ENCODE measurements at regions of chr2 and their contacts with region 1.

Region 1: DNA sequence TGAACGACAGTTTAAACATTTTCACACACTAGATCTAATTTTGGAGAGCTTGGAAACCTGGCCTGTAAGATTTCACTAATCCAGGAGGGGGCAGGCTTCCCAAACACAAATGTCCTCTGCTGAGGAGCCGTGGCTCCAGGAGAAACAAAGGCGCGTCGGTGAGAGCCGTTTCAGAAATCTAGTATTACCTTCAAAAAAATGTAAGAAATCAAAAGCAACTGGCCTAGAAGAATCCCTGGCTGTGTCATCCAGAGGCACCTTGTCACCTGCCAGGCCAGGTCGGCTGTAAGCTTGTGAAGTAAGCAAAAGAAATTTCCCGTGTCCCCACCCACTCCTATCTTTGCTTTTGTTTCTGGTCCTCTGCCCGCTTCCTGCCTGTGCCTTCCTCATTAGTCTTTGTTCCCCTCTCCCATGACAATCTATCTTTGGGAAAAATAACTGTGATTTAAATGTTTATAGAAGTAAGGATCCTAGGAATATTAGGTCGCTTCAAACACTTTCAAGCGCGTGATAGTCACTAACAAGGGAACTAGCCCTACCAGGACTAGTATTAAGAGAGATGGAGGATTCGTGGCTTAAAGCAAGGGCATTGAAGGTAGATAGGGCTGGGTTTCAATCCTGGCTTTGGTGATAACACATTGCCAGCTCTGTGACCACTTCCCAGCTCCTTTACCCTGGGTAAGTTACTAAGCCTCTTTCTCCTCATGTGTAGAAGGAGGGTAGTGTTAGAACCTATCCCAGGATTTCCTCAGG is 99.5 kb upstream of the STK39 start:
- DNase-seq: peak; percentile 63 to 69 (median 64)
- H3K4me3 ChIP-seq: peak overlapping the region in 1 of 2 donors; percentile 51
- H3K4me3 Mint-ChIP-seq: peak overlapping the region; percentile 83 to 95 (median 88)
- H3K27ac ChIP-seq: no peak overlapping the region
- H3K27ac Mint-ChIP-seq: peak overlapping the region in 3 of 7 donors; percentile 64 to 81 (median 76)
- H3K4me1 ChIP-seq: no peaks in the 10 kb centered on the region
- H3K4me1 Mint-ChIP-seq: peaks cover 5 to 7% (median 6%) of the 10 kb centered on the region in 4 donors
- H3K27me3 ChIP-seq: no peaks in the 10 kb centered on the region
- H3K27me3 Mint-ChIP-seq: peaks cover under 1 to 7% of the 10 kb centered on the region in 2 donors

Region 2: DNA sequence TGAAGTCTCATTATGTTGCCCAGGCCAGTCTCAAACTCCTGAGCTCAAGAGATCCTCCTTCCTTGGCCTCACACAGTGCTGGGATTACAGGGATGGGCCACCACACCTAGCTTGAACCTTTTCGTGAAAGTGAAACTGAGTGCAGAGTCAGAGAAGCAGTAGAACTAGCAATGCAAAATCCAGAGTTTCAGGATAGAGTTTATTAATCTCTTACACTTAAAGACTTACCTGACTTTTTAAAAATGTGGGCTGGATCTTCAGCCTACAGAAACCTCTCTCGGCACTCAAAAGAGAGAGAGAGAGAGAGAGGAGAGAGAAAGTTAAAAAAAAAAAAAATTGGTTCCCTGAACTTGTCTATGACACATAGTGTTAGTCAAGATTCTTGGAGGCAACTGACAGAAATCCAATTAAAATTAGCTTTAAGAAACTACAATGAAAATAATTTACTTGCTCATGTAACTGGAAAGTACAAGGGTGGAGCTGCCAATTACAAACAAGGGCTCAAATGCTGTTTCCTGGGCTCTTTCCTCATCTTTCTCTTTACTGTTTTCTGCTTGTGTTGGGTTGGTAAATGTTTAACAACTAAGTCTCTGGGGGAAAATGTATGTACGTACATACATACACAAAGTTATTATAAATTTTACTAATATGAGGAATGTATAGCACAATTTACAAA is 11.0 kb after region 1 on chr2:
- CTCF ChIA-PET with region 1: interaction called, 31 read pairs
- POLR2A ChIA-PET with region 1: no interaction called
- intact Hi-C with region 1: no loop called
- DNase-seq: no peak
- H3K4me3 ChIP-seq: no peak overlapping the region
- H3K4me3 Mint-ChIP-seq: peak overlapping the region in 4 of 8 donors; percentile 27 to 50 (median 39)
- H3K27ac ChIP-seq: no peak overlapping the region
- H3K27ac Mint-ChIP-seq: peak overlapping the region in 2 of 7 donors; percentile 15 to 24
- H3K4me1 ChIP-seq: peaks cover 15% of the 10 kb centered on the region
- H3K4me1 Mint-ChIP-seq: peaks cover 14 to 31% (median 22%) of the 10 kb centered on the region in 4 donors
- H3K27me3 ChIP-seq: no peaks in the 10 kb centered on the region
- H3K27me3 Mint-ChIP-seq: peaks cover 0 to 1% of the 10 kb centered on the region in 2 donors

Region 3: DNA sequence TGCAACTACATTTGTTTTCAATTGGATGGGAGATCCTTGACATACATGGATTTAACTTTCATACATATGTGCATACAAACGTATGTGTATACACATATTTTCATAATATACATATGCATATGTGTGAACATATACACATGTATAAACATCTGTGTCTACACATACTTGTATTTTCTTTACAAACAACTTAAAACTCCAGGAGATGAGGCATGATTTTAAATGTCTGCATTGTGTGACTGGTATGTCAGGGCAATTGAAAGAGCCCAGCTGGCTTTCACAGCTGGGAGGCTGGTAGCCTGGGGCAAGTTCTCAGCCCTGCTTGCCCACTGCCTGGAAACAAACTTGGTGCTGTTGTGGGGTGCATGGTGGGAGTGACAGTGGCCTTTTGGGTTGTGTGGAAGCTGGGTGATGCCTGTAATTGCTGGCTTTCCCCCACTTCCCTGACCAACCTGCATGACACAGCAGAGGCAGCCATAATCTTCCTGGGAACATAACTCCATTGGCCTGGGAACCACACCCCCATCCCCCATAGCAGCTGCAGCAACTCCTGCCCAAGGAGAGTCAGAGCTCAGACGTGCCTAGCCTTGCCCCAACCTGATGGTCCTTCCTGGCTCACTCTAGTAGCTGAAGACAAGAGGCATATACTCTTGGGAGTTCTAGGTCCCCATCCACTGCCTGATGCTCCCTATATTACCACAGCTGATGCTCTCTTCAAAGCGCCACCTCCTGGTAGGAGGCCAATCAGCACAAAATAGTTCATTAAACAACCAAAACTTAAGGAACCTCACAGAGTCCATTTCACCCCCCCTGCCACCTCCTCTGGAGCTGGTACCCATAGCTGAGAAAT is 267.5 kb after region 1 on chr2:
- CTCF ChIA-PET with region 1: no interaction called
- POLR2A ChIA-PET with region 1: no interaction called
- intact Hi-C with region 1: loop called (anchors 5 kb)
- DNase-seq: no peak
- H3K4me3 ChIP-seq: no peak overlapping the region
- H3K4me3 Mint-ChIP-seq: no peak overlapping the region
- H3K27ac ChIP-seq: no peak overlapping the region
- H3K27ac Mint-ChIP-seq: no peak overlapping the region
- H3K4me1 ChIP-seq: peaks cover 6% of the 10 kb centered on the region
- H3K4me1 Mint-ChIP-seq: peaks cover 6 to 19% (median 9%) of the 10 kb centered on the region in 4 donors
- H3K27me3 ChIP-seq: no peaks in the 10 kb centered on the region
- H3K27me3 Mint-ChIP-seq: no peaks in the 10 kb centered on the region

Region 4: GRCh38 chr2:168632709-168633121 is 285.8 kb after region 1 on chr2:
- CTCF ChIA-PET with region 1: no interaction called
- POLR2A ChIA-PET with region 1: no interaction called
- intact Hi-C with region 1: no loop called
- DNase-seq: no peak
- H3K4me3 ChIP-seq: no peak overlapping the region
- H3K4me3 Mint-ChIP-seq: no peak overlapping the region
- H3K27ac ChIP-seq: no peak overlapping the region
- H3K27ac Mint-ChIP-seq: no peak overlapping the region
- H3K4me1 ChIP-seq: no peaks in the 10 kb centered on the region
- H3K4me1 Mint-ChIP-seq: peaks cover 1 to 9% (median 6%) of the 10 kb centered on the region in 4 donors
- H3K27me3 ChIP-seq: no peaks in the 10 kb centered on the region
- H3K27me3 Mint-ChIP-seq: no peaks in the 10 kb centered on the region

Region 5: DNA sequence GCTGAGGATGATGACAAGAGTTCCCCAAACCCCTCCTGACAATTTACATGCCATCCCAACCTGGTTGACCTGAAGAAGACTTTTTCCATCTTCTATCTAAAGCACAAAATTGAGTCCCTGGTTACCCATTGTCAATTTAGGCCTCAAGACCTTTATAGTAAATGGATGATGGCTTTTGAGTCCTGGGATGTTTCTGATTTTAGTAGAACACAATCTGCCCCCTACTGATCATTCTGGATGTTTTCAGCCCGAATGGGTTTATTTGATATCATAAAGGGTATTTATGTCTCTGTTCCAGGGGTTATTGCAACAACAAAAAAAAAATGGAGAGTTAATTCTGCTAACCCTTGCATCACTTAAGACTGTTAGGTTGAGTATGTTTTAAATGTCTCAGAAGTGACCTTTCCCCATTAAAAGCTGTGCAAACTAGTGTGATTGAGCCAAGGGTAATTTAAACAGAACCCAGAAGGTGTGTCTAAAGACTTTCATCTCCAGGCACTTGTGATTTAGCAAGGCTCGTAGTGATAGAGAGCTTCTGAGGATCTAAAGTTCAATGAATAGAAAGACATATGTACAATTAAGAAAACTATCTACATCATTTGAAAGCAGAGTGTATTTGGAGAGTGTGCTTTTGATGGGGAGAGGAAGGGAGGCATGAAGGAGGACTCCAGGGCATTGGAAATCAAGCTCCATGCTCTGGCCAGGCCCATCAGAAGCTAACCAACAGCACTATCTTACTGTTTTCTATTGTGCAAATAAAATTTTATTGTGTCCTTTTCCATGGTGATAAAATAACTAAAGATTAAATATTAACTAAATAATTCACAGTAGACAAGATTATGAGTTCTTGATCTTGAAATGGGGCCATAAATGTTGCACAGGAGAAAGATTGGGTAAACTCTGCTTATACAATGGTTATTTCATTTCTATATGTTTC is 358.9 kb after region 1 on chr2:
- CTCF ChIA-PET with region 1: interaction called, 15 read pairs
- POLR2A ChIA-PET with region 1: no interaction called
- intact Hi-C with region 1: loop called (anchors 1 kb)
- DNase-seq: peak in 2 of 5 donors; percentile 2 to 10
- H3K4me3 ChIP-seq: no peak overlapping the region
- H3K4me3 Mint-ChIP-seq: no peak overlapping the region
- H3K27ac ChIP-seq: no peak overlapping the region
- H3K27ac Mint-ChIP-seq: no peak overlapping the region
- H3K4me1 ChIP-seq: no peaks in the 10 kb centered on the region
- H3K4me1 Mint-ChIP-seq: peaks cover 0 to 4% (median 2%) of the 10 kb centered on the region in 4 donors
- H3K27me3 ChIP-seq: no peaks in the 10 kb centered on the region
- H3K27me3 Mint-ChIP-seq: no peaks in the 10 kb centered on the region

Region 6: GRCh38 chr2:168849610-168850009 is 502.7 kb after region 1 on chr2:
- CTCF ChIA-PET with region 1: no interaction called
- POLR2A ChIA-PET with region 1: no interaction called
- intact Hi-C with region 1: loop called (anchors 1 kb)
- DNase-seq: no peak
- H3K4me3 ChIP-seq: no peak overlapping the region
- H3K4me3 Mint-ChIP-seq: no peak overlapping the region
- H3K27ac ChIP-seq: no peak overlapping the region
- H3K27ac Mint-ChIP-seq: no peak overlapping the region
- H3K4me1 ChIP-seq: no peaks in the 10 kb centered on the region
- H3K4me1 Mint-ChIP-seq: peaks cover 0 to 2% (median under 1%) of the 10 kb centered on the region in 4 donors
- H3K27me3 ChIP-seq: no peaks in the 10 kb centered on the region
- H3K27me3 Mint-ChIP-seq: no peaks in the 10 kb centered on the region

Measured in CD4-positive, alpha-beta memory T cell (primary cell).